AG04449 (cell line): ENCODE measurements at regions of chr3 and their contacts with region 1.

Region 1: DNA sequence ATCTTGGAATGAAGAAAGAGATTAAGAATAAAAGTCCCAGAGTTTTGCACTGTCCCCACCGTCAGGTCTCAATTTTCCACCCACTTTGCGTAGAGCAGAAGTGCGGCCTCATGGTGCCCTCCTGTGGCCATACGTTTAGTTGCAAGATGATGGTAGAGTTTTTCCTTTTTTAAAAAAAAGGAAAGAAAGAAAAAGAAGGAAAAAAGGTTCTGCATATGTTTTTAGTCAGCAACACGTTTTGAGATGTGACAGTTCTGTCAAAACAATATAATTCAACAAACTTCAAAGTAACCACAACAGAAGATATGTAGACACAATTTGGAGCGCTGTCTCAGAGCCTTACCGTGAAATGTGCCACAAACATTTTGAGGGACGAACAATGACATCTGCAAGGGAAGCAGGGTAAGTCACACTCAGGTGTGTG is 24.6 kb downstream of the EBLN2 start:
- DNase-seq: no peak
- H3K4me3 ChIP-seq: no peak overlapping the region
- CTCF ChIP-seq: peak; percentile 63

Region 2: GRCh38 chr3:72818092-72818773 is 267.9 kb before region 1 on chr3:
- CTCF ChIA-PET with region 1: interaction called, 10 read pairs
- POLR2A ChIA-PET with region 1: no interaction called
- DNase-seq: no peak
- H3K4me3 ChIP-seq: no peak overlapping the region
- CTCF ChIP-seq: peak; percentile 55

Region 3: GRCh38 chr3:72847751-72848702 is 238.1 kb before region 1 on chr3 and contains the start of gene SHQ1:
- CTCF ChIA-PET with region 1: interaction called, 135 read pairs
- POLR2A ChIA-PET with region 1: no interaction called
- DNase-seq: peak; percentile 44
- H3K4me3 ChIP-seq: peak within 1 kb of the TSS; percentile 94
- CTCF ChIP-seq: no peak

Region 4: DNA sequence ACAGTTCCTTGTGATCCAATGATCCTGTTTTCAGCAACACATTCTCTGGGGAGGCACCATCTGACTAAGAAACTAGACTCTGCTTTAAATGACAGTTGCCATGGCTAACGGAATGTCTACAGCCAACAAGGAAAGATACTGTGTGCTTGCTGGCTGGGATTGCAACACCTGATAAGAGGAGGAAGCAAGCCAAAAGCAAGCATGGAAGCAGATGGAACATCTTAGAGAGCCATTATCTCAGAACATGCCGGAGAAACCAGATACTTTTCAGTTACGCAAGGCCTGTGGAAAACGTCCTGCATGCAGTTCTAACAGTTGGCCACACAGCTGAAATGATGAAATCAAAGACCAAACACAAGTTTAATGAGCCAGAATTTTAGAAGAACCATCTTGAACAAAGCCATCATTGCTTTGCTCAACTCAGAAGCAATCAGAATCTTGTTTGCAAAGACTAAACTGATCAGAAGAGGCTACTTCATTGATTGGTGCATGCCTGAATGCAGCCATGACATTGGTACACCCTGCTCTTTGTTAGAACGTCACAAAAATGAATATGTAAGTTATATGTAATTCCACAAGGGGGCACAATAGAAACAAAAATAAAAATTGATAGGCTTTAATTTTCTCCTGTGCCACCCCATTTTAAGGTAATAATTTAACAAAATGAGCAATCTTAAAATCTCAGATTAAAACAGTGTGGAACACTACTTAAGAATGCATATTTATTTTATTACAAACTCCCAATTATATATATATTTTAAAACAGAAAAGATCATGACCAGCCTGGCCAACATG is 147.4 kb before region 1 on chr3:
- CTCF ChIA-PET with region 1: interaction called, 48 read pairs
- POLR2A ChIA-PET with region 1: no interaction called
- DNase-seq: peak; percentile 91
- H3K4me3 ChIP-seq: no peak overlapping the region
- CTCF ChIP-seq: peak; percentile 44

Region 5: GRCh38 chr3:73100741-73101559 is 14.9 kb after region 1 on chr3:
- CTCF ChIA-PET with region 1: interaction called, 17 read pairs
- POLR2A ChIA-PET with region 1: no interaction called
- DNase-seq: peak; percentile 26
- H3K4me3 ChIP-seq: no peak overlapping the region
- CTCF ChIP-seq: peak; percentile 93